Astrocyte of the cerebellum (primary cell): ENCODE measurements at regions of chr5 and their contacts with region 1.

Region 1: DNA sequence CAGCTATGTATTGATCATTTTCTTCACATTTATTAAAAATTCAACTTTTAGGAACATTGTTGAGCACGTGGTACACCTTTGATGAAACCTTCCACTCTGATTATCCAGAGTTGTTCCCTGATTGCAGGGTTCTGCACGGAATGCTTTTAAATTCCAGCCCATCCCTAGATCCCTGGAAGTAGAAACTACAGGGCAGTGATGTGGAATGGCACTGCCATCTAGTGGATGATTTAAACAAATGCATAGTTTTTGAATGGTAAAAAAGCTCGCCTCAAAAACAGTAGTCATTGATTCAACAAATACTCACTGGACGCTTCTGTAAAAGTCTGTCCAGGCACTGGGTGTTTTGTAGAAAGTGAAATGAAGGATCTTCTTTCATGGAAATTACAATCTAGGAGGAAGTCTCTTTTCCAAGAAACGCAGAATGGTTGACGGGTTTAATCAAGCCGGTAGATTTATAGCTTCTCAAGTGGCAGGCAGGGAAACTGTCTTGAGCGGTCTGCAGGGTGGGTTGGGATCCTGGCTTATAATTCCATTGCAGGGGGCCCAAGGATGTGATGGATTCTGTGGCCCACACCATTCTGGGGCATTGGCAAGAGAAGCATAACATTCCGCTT is 118.4 kb downstream of the ARHGAP26 start:
- DNase-seq: no peak
- H3K4me3 ChIP-seq: no peak overlapping the region
- CTCF ChIP-seq: peak; percentile 61

Region 2: GRCh38 chr5:141729387-141730006 is 1159.1 kb before region 1 on chr5:
- in situ Hi-C with region 1: no loop called
- DNase-seq: no peak
- H3K4me3 ChIP-seq: no peak overlapping the region
- CTCF ChIP-seq: no peak

Region 3: DNA sequence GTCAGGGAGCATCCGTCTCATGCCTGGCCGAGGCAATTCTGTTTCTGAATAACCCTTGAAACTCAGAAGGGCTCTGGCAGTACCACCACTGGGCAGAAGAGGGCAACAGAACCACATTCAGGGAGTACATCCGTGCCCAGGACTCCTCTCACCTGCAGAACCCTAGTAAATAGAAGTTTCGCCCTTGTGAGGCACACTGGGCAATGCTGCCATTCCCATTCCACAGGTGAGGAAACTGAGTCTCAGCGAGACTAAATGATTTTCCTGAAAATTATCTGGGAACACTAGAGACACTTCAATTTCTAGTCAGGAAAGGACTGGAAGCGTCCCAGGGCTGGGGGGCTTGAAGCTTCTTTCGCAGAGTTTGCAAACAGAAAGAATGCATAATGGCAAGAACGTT is 277.4 kb before region 1 on chr5:
- in situ Hi-C with region 1: loop called (anchors 25 kb)
- DNase-seq: no peak
- H3K4me3 ChIP-seq: no peak overlapping the region
- CTCF ChIP-seq: peak; percentile 77

Region 4: DNA sequence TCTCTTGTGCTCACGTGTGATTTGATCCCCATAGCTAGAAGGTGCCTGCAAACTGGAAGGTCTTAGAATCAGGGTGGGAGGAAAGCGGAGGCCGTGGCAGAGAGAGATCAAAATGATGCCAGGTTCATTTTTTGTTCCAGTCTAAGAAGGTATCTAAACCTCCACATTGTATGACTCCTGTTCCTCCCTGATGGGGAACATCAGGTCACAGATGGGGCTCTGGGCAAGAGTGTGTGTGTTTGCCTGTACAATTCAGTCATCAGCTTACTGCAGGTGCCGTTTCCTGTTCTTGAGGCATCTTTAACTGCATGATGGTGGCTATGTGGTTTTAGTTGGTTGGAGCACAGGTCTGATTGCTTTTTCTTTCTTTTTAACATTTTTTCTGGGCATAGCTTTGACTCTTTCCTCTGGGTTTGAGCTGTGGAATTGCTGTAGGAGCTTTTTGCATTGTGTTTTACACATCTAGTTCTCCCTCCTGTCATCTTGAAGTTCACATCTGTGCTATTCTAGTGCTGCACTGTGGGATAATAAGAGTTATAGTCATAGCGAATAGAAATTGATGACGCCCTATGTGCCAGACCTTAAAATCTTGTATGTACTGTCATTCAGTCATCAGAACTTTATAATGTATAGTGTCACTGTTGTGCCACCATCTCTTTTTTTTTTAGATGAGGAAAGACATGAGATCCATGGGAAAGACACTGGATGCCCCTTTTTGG is 87.6 kb before region 1 on chr5:
- in situ Hi-C with region 1: no loop called
- DNase-seq: no peak
- H3K4me3 ChIP-seq: no peak overlapping the region
- CTCF ChIP-seq: no peak